Aorta (tissue), 5 donors: ENCODE measurements at regions of chr19 and their contacts with region 1.

Region 1: GRCh38 chr19:39031368-39032062 is 834 bp downstream of the FBXO27 start:
- DNase-seq: peak; percentile 91 to 95
- ATAC-seq: peak; percentile 88
- H3K4me3 ChIP-seq: peak overlapping the region; percentile 27 to 55
- H3K27ac ChIP-seq: no peak overlapping the region
- H3K4me1 ChIP-seq: no peaks in the 10 kb centered on the region
- H3K27me3 ChIP-seq: no peaks in the 10 kb centered on the region

Region 2: GRCh38 chr19:38917516-38918491 is 113.7 kb before region 1 on chr19:
- intact Hi-C with region 1: no loop called
- DNase-seq: peak in 1 of 2 donors; percentile 69
- ATAC-seq: no peak
- H3K4me3 ChIP-seq: no peak overlapping the region
- H3K27ac ChIP-seq: no peak overlapping the region
- H3K4me1 ChIP-seq: no peaks in the 10 kb centered on the region
- H3K27me3 ChIP-seq: no peaks in the 10 kb centered on the region

Region 3: DNA sequence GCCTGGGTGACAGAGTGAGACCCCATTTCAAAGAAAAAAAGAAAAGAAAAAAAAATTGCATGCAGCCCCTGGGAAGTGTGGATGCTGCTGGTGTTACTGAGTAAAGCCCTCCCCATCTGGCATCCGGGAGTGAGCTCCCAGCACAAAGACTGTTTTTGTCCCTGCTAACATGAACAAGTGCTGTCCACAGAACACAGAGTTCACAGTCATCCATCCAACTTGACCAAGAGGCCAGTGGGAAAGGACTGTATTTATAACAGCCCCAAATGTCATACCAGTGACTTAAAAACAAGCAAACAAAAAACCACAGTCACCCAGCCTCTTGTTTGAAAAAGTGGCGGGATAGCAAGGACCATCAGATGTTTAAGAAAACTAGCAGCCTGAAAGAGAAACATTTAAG is 66.8 kb before region 1 on chr19:
- intact Hi-C with region 1: loop called in 1 of 2 experiments (anchors 5 kb)
- DNase-seq: no peak
- ATAC-seq: no peak
- H3K4me3 ChIP-seq: no peak overlapping the region
- H3K27ac ChIP-seq: no peak overlapping the region
- H3K4me1 ChIP-seq: no peaks in the 10 kb centered on the region
- H3K27me3 ChIP-seq: no peaks in the 10 kb centered on the region

Region 4: GRCh38 chr19:38975214-38975860 is 56.2 kb before region 1 on chr19 and contains the start of gene FBXO17:
- intact Hi-C with region 1: loop called (anchors 5 kb)
- DNase-seq: peak; percentile 71 to 85
- ATAC-seq: peak; percentile 92
- H3K4me3 ChIP-seq: peak within 1 kb of the TSS; percentile 32 to 52
- H3K27ac ChIP-seq: peak within 1 kb of the TSS; percentile 49 to 65
- H3K4me1 ChIP-seq: no peaks in the 10 kb centered on the region
- H3K27me3 ChIP-seq: no peaks in the 10 kb centered on the region
- total RNA-seq, gene FBXO17: 23.6 to 33.0 TPM

Region 5: GRCh38 chr19:39319892-39320248 is 288.4 kb after region 1 on chr19:
- intact Hi-C with region 1: no loop called
- DNase-seq: no peak
- ATAC-seq: no peak
- H3K4me3 ChIP-seq: no peak overlapping the region
- H3K27ac ChIP-seq: no peak overlapping the region
- H3K4me1 ChIP-seq: no peaks in the 10 kb centered on the region
- H3K27me3 ChIP-seq: no peaks in the 10 kb centered on the region